Aorta (tissue), 5 donors: ENCODE measurements at regions of chr14 and their contacts with region 1.

Region 1: GRCh38 chr14:63543000-63543825 is at the start of gene PPP2R5E:
- DNase-seq: peak; percentile 99
- ATAC-seq: peak; percentile 100
- H3K4me3 ChIP-seq: peak within 1 kb of the TSS; percentile 77 to 87
- H3K27ac ChIP-seq: peak within 1 kb of the TSS; percentile 17 to 81
- H3K4me1 ChIP-seq: peaks cover 0 to 2% of the 10 kb centered on the region in 2 donors
- H3K27me3 ChIP-seq: no peaks in the 10 kb centered on the region
- total RNA-seq, gene PPP2R5E: 35.5 to 42.1 TPM

Region 2: GRCh38 chr14:63388763-63389431 is 154.3 kb before region 1 on chr14:
- intact Hi-C with region 1: loop called (anchors 2 to 5 kb)
- DNase-seq: peak; percentile 65 to 88
- ATAC-seq: peak; percentile 82
- H3K4me3 ChIP-seq: no peak overlapping the region
- H3K27ac ChIP-seq: no peak overlapping the region
- H3K4me1 ChIP-seq: no peaks in the 10 kb centered on the region
- H3K27me3 ChIP-seq: no peaks in the 10 kb centered on the region

Region 3: DNA sequence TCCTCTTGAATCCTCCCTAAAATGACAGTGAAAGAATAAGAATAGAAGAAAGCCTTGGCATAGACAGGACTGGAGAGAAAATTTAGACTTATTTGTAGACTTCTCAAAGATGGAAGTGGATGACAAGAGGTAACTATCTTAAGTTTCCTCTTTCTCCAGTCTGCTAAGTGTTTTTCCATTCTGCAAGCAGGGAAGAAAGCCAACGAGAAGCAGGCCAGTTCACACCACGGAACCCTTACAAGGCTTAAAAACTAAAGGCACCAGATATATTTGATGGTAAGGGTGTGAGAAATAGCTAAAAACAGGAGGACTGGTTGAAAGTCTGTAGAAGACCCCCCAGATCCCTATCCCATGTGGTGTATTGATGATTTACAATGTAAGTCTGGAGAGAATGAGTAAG is 141.6 kb before region 1 on chr14:
- intact Hi-C with region 1: loop called in 1 of 2 experiments (anchors 5 kb)
- DNase-seq: no peak
- ATAC-seq: no peak
- H3K4me3 ChIP-seq: no peak overlapping the region
- H3K27ac ChIP-seq: no peak overlapping the region
- H3K4me1 ChIP-seq: peaks cover 0 to 4% of the 10 kb centered on the region in 2 donors
- H3K27me3 ChIP-seq: no peaks in the 10 kb centered on the region

Region 4: DNA sequence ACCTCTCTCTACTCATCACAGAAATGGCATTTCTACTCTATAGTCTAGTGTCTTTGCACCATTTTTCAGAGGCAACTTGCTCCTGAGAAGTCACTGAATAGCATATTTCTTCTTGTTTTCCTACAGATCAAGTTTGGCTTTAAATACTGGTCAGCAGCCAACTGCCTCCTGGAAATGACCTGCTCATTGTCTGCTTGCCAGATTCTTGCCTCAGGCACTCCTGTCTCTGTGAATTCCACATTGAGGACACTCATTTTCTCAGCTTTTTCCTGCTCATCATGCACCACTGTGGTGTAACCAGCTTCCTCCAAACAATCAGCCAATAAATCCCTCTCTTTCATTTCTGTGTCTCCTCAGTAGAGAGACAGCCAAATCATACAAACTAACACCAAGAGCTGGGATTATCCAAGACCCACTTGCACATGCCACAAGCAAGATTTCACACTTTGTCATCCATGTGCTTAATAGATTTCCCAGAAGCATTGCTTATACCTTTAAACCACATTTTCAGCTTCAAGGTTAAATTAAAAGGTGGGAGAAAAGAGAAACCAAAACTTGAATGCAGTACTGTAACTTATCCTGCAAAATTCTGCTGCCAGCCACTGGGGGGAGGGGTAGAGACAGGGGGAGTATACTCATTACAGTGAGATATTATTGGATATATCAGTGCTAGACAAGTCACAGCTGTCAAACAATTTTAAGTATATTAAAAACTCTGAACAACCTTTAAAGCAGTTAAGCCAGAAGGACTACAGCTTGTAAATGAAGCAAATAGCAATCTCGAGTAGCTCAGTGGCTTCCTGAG is 105.1 kb before region 1 on chr14:
- intact Hi-C with region 1: loop called in 1 of 2 experiments (anchors 10 kb)
- DNase-seq: peak; percentile 54 to 77
- ATAC-seq: peak; percentile 38
- H3K4me3 ChIP-seq: peak overlapping the region in 1 of 2 donors; percentile 26
- H3K27ac ChIP-seq: peak overlapping the region in 1 of 2 donors; percentile 48
- H3K4me1 ChIP-seq: peaks cover 9 to 17% of the 10 kb centered on the region in 2 donors
- H3K27me3 ChIP-seq: no peaks in the 10 kb centered on the region

Region 5: DNA sequence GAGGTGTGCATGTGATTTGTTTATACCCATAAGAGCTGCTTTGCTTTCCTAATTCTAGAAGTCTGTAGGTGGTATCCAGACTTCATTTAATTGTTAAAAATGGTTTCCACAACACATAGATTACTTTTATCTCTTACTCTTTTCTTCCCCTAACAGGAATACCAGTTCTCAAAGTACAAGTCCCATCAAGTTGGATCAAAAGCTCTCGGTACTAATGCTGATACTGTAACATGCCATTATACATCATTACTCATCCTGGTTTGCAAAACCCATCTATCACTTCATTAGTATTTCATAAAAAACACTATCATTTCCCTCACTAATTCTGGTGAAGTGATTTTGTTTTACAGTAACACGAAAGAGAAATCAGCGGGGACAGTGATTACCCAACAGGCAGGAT is 94.4 kb before region 1 on chr14:
- intact Hi-C with region 1: no loop called
- DNase-seq: no peak
- ATAC-seq: no peak
- H3K4me3 ChIP-seq: no peak overlapping the region
- H3K27ac ChIP-seq: no peak overlapping the region
- H3K4me1 ChIP-seq: peaks cover 1 to 4% of the 10 kb centered on the region in 2 donors
- H3K27me3 ChIP-seq: no peaks in the 10 kb centered on the region

Region 6: DNA sequence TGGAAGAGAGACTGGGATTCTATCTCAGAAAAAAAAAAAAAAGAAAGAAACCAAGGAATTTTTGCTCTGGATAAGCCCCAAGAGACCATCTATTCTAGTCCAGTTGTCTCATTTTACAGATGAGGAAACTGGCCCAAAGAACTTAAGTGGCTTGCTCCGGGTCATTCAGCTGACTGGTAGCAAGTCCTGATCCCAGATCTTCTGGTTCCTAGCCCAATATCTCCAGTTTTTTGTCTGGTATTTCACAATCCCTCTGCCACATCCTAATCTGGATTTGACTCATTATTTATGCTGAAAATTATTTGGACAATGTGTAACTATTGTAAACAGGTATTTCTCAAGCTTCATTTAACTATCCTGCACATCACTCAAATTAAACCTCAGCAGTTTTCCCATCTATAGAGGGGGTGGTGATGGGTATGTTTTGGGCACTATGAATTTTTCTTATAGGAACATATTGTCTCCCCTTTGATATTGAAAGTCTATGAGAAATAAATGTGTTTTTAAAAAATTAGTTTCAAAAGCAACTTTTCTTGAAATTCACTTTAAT is 43.4 kb before region 1 on chr14:
- intact Hi-C with region 1: loop called in 1 of 2 experiments (anchors 5 kb)
- DNase-seq: no peak
- ATAC-seq: peak; percentile 80
- H3K4me3 ChIP-seq: no peak overlapping the region
- H3K27ac ChIP-seq: no peak overlapping the region
- H3K4me1 ChIP-seq: peaks cover 2 to 11% of the 10 kb centered on the region in 2 donors
- H3K27me3 ChIP-seq: no peaks in the 10 kb centered on the region

Region 7: DNA sequence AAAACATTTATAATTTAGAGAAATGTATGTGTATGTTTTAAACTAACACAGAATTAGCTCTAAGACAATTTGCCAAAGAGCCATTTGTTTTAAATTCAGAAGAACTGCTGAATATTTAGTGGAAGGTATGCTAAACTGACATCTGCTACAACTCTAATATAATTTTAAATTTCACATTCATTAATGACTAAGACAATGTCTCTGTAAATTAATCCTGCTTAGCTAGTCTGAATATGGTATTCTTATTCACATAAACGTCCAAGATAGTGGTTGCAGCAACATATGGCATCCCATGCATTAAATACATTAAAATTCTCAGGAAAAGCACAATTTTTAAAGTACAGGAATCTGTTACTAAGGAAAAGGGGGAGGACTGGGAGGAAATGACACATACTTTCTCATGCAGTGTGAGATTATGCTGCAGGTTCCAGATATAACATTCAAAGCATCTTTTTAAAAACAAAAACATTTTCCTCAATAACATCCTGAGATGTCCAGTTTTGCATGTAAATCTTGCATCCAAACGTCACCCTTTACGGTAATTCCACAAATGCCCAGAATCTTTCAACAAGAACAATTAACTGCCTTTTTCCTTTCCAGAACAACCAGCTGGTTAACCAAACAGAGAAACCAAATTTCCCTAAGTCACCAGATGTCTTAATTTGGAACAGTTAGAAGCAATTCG is 71.6 kb after region 1 on chr14:
- intact Hi-C with region 1: loop called in 1 of 2 experiments (anchors 10 kb)
- DNase-seq: no peak
- ATAC-seq: no peak
- H3K4me3 ChIP-seq: no peak overlapping the region
- H3K27ac ChIP-seq: no peak overlapping the region
- H3K4me1 ChIP-seq: peaks cover 0 to 3% of the 10 kb centered on the region in 2 donors
- H3K27me3 ChIP-seq: no peaks in the 10 kb centered on the region

Region 8: GRCh38 chr14:63641473-63642228 is 98.4 kb after region 1 on chr14 and contains the start of gene WDR89:
- intact Hi-C with region 1: loop called (anchors 2 to 5 kb)
- DNase-seq: peak; percentile 97 to 99
- ATAC-seq: peak; percentile 99
- H3K4me3 ChIP-seq: peak within 1 kb of the TSS; percentile 54 to 88
- H3K27ac ChIP-seq: peak within 1 kb of the TSS; percentile 57 to 64
- H3K4me1 ChIP-seq: no peaks in the 10 kb centered on the region
- H3K27me3 ChIP-seq: no peaks in the 10 kb centered on the region
- total RNA-seq, gene WDR89: 7.9 to 12.9 TPM